HepG2 (cell line): ENCODE measurements at regions of chr10 and their contacts with region 1.

Region 1: DNA sequence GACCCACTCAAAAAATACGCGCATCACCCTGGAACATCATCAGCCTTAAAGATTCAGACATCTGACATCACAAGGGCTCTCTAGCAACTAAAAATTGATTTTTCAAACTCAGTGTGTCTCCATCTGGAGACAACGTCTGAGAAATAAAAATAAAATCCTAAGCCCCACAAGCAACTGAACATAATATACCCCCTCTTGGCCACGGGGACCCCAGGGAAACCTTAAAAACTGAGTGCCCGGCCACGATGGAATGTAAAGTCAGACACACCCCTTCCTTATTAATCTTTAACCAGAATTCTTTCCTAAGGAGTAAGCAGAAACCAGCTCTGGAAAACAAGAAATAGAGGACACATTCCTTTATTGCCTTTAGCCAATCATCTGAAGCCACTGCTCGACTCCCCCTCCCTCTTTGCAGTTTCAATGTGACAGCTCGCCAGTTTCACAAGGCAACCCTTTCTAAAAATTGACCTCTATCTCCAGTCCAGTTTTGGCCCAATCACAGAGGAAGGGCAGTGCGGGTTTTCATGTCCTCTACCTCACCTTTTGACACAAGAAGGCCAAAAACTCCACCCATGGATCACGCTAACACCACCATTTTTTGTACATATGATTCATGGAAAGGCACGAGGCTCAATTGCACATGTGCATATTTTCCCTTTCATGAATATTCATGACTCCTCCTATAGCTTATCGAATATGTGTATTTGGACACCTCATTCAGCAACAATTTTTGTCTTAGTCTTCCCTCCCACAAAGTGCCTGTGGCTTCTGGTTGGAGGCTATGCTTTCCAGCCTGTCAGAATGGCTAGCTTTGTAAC is 24.2 kb downstream of the IFIT3 start:
- DNase-seq: peak; percentile 89
- ATAC-seq: peak; percentile 79
- H3K4me3 ChIP-seq: peak overlapping the region; percentile 30 to 56 (median 36); a peak in 5 of 6 replicates
- H3K27ac ChIP-seq: peak overlapping the region; percentile 68
- H3K4me1 ChIP-seq: peaks cover 63% of the 10 kb centered on the region
- H3K27me3 ChIP-seq: no peaks in the 10 kb centered on the region
- CTCF ChIP-seq: no peak
- EP300 ChIP-seq: no peak
- POLR2A ChIP-seq: no peak
- RAD21 ChIP-seq: no peak

Region 2: DNA sequence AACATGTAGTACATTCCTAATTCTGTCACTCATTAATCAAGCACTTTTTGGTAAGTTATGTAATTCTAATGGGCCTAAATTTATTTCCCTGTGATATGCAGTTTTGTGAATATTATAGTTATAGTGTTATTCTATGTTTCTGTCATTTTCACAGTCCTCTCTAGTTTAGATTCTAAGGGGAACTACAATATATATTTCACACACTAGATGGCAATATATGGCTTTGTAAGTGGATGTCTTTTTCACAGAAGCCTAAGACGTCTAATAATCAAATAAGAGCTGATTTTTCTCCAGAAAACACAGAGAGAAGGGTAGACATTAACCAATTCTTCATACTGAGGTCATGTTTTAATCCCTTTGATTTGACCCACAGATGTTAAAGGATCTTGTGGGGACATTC is 786.9 kb before region 1 on chr10:
- CTCF ChIA-PET with region 1: no interaction called
- POLR2A ChIA-PET with region 1: no interaction called
- in situ Hi-C with region 1: no loop called
- intact Hi-C with region 1: no loop called
- DNase-seq: no peak
- ATAC-seq: 0 out of 3 replicates have a peak, but pooled peaks have one; percentile 51
- H3K4me3 ChIP-seq: no peak overlapping the region
- H3K27ac ChIP-seq: no peak overlapping the region
- H3K4me1 ChIP-seq: no peaks in the 10 kb centered on the region
- H3K27me3 ChIP-seq: no peaks in the 10 kb centered on the region; a peak in 1 of 5 replicates
- CTCF ChIP-seq: no peak
- EP300 ChIP-seq: no peak
- POLR2A ChIP-seq: no peak
- RAD21 ChIP-seq: no peak

Region 3: DNA sequence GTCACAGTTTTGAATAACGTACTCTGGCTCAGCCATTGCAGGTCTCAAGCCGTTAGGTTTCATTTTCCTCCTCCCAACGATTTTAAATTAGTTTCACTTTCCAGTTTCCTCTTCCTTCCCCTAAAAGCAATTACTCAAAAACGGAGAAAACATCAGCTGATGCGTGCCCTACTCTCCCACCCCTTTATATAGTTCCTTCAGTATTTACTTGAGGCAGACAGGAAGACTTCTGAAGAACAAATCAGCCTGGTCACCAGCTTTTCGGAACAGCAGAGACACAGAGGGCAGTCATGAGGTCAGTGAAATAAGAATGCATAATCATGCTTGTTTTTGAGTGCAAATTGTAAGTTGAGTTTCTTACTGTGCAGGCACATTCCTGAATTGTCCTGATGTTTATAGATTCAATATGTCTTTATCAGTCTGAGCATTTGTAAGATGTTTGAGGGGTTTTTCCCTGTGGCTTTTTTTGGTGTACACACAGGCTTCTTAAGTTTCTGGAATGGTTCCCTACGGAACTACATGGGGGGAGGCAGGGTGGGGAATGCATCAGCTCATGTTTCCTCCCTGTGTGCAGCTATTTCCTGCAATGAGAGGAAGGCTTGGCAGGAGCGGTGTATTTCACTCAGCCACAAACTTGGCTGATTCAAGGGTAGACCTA is 24.1 kb before region 1 on chr10 and contains the start of gene IFIT3:
- CTCF ChIA-PET with region 1: no interaction called
- POLR2A ChIA-PET with region 1: interaction called, 17 read pairs
- in situ Hi-C with region 1: no loop called
- intact Hi-C with region 1: no loop called
- DNase-seq: peak; percentile 38
- ATAC-seq: peak; percentile 87
- H3K4me3 ChIP-seq: peak within 1 kb of the TSS; percentile 58 to 84 (median 69)
- H3K27ac ChIP-seq: peak within 1 kb of the TSS; percentile 47
- H3K4me1 ChIP-seq: peaks cover 46% of the 10 kb centered on the region
- H3K27me3 ChIP-seq: no peaks in the 10 kb centered on the region
- CTCF ChIP-seq: no peak
- EP300 ChIP-seq: no peak
- POLR2A ChIP-seq: no peak
- RAD21 ChIP-seq: no peak
- total RNA-seq, gene IFIT3: 3.1 and 4.3 TPM in 2 replicates

Region 4: GRCh38 chr10:90443342-90443741 is 1091.4 kb after region 1 on chr10:
- CTCF ChIA-PET with region 1: no interaction called
- POLR2A ChIA-PET with region 1: no interaction called
- in situ Hi-C with region 1: no loop called
- intact Hi-C with region 1: loop called (anchors 5 kb)
- DNase-seq: no peak
- ATAC-seq: no peak
- H3K4me3 ChIP-seq: no peak overlapping the region
- H3K27ac ChIP-seq: no peak overlapping the region
- H3K4me1 ChIP-seq: no peaks in the 10 kb centered on the region
- H3K27me3 ChIP-seq: no peaks in the 10 kb centered on the region; a peak in 1 of 5 replicates
- CTCF ChIP-seq: no peak
- EP300 ChIP-seq: no peak
- POLR2A ChIP-seq: no peak
- RAD21 ChIP-seq: no peak